ENCODE measurements at regions of chr11 and their contacts with region 1.

Region 1: GRCh38 chr11:2400069-2400760 is at the start of gene TSSC4:
- ATAC-seq: peak; percentile 83 to 90 (median 88)
- H3K4me3 ChIP-seq: peak within 1 kb of the TSS; percentile 74 to 98 (median 76)
- H3K27ac ChIP-seq: peak within 1 kb of the TSS; percentile 94 to 98
- H3K4me1 ChIP-seq: peaks cover 15 to 16% of the 10 kb centered on the region in 2 donors
- total RNA-seq, gene TSSC4: 34.1 to 51.2 (median 42.6) TPM

Region 2: DNA sequence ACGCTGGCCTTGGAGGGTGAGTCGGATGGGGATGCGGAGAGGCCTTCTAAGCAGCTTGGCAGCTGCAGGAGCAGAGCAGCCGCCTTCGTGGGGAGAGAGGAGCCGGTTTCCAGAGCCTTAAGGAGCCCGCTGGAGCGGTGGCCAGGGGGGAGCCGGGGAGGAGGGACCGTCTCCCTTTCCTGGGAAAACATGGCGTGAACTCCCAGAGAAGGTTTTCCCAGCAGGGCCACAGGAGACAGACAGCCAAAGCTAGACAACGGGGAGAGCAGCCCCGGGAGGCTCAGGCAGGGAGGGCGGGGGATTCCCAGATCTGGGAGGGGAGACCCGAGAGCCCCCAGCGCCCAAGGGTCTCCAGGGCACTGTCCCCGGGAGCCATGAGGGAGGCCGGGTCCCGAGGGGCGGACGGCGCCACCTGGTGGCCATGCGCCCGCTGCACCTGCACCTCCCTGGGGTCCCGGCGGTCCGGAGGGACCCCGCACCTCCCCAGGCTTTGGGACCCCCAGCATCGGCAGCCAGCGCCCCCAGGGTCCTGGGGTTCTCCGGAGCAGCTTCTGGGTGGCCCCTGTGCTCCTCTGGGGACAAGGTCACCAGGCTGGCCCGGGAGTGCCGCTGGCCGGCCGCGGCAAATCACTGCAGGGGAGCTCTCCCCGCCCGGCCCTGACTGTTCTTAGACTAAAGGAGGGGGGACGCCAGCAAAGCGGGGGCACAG is 567.9 kb before region 1 on chr11:
- in situ Hi-C with region 1: no loop called
- ATAC-seq: peak; percentile 81 to 93 (median 86)
- H3K4me3 ChIP-seq: peak overlapping the region in 1 of 5 donors; percentile 16
- H3K27ac ChIP-seq: no peak overlapping the region
- H3K4me1 ChIP-seq: peaks cover 0 to 4% of the 10 kb centered on the region in 2 donors

Region 3: DNA sequence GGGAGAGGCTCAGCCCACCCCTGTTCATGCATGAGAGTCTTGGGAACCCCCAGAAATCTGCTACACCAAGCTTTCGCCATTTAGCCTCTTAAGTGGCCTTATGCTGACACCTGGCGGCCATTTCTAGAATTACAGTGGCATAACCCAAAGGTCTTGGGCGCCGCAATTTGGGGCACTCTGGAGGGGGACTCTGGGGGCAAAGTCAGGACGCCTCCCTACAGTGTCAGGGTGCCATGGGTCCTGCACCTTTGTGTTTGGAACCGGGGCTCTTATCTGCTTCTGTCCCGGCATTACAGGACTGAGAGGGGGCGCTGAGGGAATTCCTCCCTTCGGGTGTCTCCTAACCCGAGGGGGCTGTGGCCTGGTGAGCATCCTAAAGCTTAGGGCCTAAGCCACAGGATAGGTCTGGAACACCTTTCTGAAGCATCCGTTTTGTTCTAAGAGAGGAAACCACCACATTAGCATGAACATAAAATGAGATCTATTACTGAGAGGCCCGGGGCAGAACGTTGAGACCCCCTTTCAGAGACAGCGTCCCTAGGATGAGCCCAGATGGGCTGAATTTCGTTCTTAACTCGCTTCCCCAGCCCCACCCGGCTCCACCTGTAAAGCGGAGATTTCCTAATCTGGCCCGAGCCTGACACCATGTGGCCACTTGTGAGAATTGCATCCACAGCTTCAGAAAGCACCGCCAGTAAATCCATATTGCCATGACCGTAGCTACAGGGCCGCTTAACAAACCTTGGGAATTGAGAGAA is 248.5 kb before region 1 on chr11:
- in situ Hi-C with region 1: no loop called
- ATAC-seq: peak; percentile 19 to 62 (median 57)
- H3K4me3 ChIP-seq: peak overlapping the region in 1 of 5 donors; percentile 12
- H3K27ac ChIP-seq: no peak overlapping the region
- H3K4me1 ChIP-seq: peaks cover 11 to 21% of the 10 kb centered on the region in 2 donors

Region 4: GRCh38 chr11:2196970-2197770 is 203.0 kb before region 1 on chr11:
- in situ Hi-C with region 1: loop called in 6 of 9 experiments (anchors 25 kb)
- ATAC-seq: peak; percentile 66 to 88 (median 84)
- H3K4me3 ChIP-seq: no peak overlapping the region
- H3K27ac ChIP-seq: no peak overlapping the region
- H3K4me1 ChIP-seq: peaks cover 0 to 5% of the 10 kb centered on the region in 2 donors

Region 5: GRCh38 chr11:2305140-2305840 is 94.9 kb before region 1 on chr11:
- in situ Hi-C with region 1: loop called in 1 of 9 experiments (anchors 25 kb)
- ATAC-seq: peak; percentile 24 to 87 (median 52)
- H3K4me3 ChIP-seq: no peak overlapping the region
- H3K27ac ChIP-seq: no peak overlapping the region
- H3K4me1 ChIP-seq: peaks cover 0 to 31% of the 10 kb centered on the region in 2 donors

Region 6: DNA sequence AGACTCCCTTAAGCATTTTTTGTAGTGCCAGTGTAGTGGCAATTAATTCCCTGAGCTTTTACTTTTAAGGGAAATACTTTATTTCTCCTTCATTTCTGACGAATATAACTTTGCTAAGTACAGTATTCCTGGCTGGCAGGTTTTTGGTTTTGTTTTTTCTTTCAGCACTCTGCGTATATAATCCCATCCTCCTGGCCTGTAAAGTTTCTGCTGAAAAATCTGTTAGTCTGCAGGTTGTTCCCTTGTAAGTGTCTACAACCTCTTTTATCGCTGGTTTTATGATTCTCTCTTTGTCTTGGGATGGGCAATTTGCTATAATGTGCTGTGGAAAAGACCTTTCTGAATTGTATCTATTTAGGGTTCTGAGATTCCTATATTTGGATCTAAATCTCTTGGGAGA is 243.5 kb after region 1 on chr11:
- in situ Hi-C with region 1: no loop called
- ATAC-seq: no peak
- H3K4me3 ChIP-seq: no peak overlapping the region
- H3K27ac ChIP-seq: no peak overlapping the region
- H3K4me1 ChIP-seq: no peaks in the 10 kb centered on the region

Region 7: GRCh38 chr11:2741377-2742131 is 341.3 kb after region 1 on chr11:
- in situ Hi-C with region 1: no loop called
- ATAC-seq: peak in 7 of 8 experiments; percentile 35 to 64 (median 44)
- H3K4me3 ChIP-seq: no peak overlapping the region
- H3K27ac ChIP-seq: no peak overlapping the region
- H3K4me1 ChIP-seq: peaks cover 18 to 22% of the 10 kb centered on the region in 2 donors

Measured in motor neuron (in vitro differentiated cells).